BJ (cell line): ENCODE measurements at regions of chr14 and their contacts with region 1.

Region 1: GRCh38 chr14:102096214-102097114 is 9.6 kb upstream of the HSP90AA1 start:
- DNase-seq: no peak
- H3K4me3 ChIP-seq: no peak overlapping the region
- H3K27me3 ChIP-seq: no peaks in the 10 kb centered on the region
- CTCF ChIP-seq: peak; percentile 85

Region 2: GRCh38 chr14:101707068-101707842 is 389.2 kb before region 1 on chr14:
- CTCF ChIA-PET with region 1: interaction called, 14 read pairs
- POLR2A ChIA-PET with region 1: no interaction called
- DNase-seq: no peak
- H3K4me3 ChIP-seq: no peak overlapping the region
- H3K27me3 ChIP-seq: peaks cover 6% of the 10 kb centered on the region
- CTCF ChIP-seq: peak; percentile 72

Region 3: DNA sequence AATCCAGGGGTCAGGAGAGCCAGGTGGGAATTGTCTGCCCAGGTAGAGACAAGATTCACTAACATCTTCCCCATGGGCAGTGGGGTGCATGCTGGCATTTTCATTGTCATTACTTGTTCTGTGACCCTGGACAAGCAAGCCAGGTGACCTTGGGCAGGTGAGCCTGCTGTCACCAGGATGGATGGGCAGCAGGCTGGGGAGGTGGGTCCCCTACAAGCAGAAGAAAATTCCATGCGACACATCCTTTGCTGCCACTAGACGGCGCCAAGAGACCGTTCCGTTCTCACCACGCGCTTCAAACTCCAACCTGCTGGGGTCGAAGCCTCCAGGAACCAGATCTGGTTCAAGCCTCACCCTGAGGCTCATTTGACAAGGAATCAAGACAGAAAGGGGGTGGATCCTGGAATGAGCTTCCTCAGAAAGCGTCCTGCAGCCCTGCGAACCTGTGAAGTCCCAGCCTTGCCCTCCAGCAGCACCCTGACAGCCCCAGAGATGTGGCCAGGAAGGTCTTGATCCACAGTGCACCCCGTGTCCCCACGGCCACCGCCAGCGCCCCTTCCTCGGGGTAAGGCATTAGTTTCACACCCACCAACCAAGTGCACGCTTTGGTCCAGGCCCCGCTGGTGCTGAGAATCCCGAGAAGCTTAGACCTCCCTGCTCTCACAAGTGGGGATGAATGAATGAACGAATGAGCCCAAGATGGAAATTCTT is 135.3 kb before region 1 on chr14:
- CTCF ChIA-PET with region 1: interaction called, 39 read pairs
- POLR2A ChIA-PET with region 1: no interaction called
- DNase-seq: no peak
- H3K4me3 ChIP-seq: no peak overlapping the region
- H3K27me3 ChIP-seq: no peaks in the 10 kb centered on the region
- CTCF ChIP-seq: peak; percentile 96

Region 4: GRCh38 chr14:102046343-102047278 is 49.9 kb before region 1 on chr14:
- CTCF ChIA-PET with region 1: interaction called, 10 read pairs
- POLR2A ChIA-PET with region 1: no interaction called
- DNase-seq: no peak
- H3K4me3 ChIP-seq: no peak overlapping the region
- H3K27me3 ChIP-seq: no peaks in the 10 kb centered on the region
- CTCF ChIP-seq: peak; percentile 38

Region 5: DNA sequence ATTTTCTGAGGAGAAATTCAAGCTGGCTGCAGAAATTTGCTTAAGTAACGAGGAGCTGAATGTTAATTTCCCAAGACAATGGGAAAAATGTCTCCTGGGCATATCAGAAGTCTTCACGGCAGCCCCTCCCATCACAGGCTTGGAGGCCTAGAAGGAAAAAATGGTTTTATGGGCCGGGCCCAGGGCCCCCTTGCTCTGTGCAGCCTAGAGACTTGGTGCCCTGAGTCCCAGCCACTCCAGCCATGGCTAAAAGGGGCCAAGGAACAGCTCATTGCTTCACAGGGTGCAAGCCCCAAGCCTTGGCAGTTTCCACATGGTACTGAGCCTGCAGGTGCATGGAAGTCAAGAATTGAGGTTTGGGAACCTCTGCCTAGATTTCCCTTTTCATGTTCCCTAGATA is 14.6 kb after region 1 on chr14:
- CTCF ChIA-PET with region 1: interaction called, 17 read pairs
- POLR2A ChIA-PET with region 1: no interaction called
- DNase-seq: no peak
- H3K4me3 ChIP-seq: no peak overlapping the region
- H3K27me3 ChIP-seq: no peaks in the 10 kb centered on the region
- CTCF ChIP-seq: no peak